ENCODE measurements at regions of chr3 and their contacts with region 1.

Region 1: DNA sequence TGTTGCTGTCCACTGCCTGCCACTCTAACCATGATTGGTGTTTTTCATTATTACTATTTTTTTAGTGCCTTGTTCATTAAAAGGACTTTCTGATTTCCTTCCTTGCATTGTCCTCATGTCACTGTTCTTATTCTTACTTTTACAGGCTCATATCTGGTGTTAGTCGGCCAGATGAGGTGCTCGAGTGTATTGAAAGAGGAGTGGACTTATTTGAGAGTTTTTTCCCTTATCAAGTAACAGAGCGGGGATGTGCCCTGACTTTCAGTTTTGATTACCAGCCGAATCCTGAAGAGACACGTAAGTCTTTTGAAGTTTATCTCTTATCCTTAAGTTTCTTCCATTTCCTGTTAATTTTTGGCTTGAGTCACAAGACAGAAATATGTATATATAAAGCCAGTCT is 23.2 kb downstream of the QTRT2 start:
- DNase-seq: no peak
- ATAC-seq: no peak
- H3K4me3 ChIP-seq: no peak overlapping the region
- H3K4me3 Mint-ChIP-seq: no peak overlapping the region
- H3K27ac ChIP-seq: no peak overlapping the region
- H3K27ac Mint-ChIP-seq: no peak overlapping the region
- H3K4me1 ChIP-seq: no peaks in the 10 kb centered on the region
- H3K4me1 Mint-ChIP-seq: no peaks in the 10 kb centered on the region
- H3K27me3 ChIP-seq: no peaks in the 10 kb centered on the region
- H3K27me3 Mint-ChIP-seq: no peaks in the 10 kb centered on the region
- CTCF ChIP-seq: no peak

Region 2: GRCh38 chr3:113953677-113954076 is 126.1 kb before region 1 on chr3:
- CTCF ChIA-PET with region 1: no interaction called
- POLR2A ChIA-PET with region 1: no interaction called
- intact Hi-C with region 1: no loop called
- DNase-seq: no peak
- ATAC-seq: no peak
- H3K4me3 ChIP-seq: no peak overlapping the region
- H3K4me3 Mint-ChIP-seq: no peak overlapping the region
- H3K27ac ChIP-seq: no peak overlapping the region
- H3K27ac Mint-ChIP-seq: no peak overlapping the region
- H3K4me1 ChIP-seq: peaks cover 13% of the 10 kb centered on the region
- H3K4me1 Mint-ChIP-seq: peaks cover 10% of the 10 kb centered on the region
- H3K27me3 ChIP-seq: no peaks in the 10 kb centered on the region
- H3K27me3 Mint-ChIP-seq: no peaks in the 10 kb centered on the region
- CTCF ChIP-seq: no peak

Region 3: DNA sequence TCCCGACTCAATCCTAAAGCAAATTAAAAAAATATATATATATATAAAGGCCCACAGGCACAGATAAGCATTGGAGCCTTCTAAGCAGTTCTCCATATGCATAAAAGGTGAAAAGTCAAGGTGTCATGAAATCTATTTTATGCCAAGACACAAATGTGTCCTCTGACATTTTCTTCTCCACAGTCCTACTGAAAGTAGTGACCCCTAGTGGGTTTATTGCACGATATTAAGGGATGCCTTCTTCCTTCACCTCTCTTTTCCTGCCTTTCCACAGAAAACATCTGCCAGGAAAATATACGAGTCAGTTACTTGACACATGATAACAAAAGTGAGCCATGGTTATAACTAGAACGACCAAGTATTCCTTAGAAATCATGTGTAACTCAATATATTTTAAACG is 517.3 kb after region 1 on chr3:
- CTCF ChIA-PET with region 1: no interaction called
- POLR2A ChIA-PET with region 1: no interaction called
- intact Hi-C with region 1: loop called in 1 of 2 experiments (anchors 10 kb)
- DNase-seq: no peak
- ATAC-seq: no peak
- H3K4me3 ChIP-seq: no peak overlapping the region
- H3K4me3 Mint-ChIP-seq: no peak overlapping the region
- H3K27ac ChIP-seq: no peak overlapping the region
- H3K27ac Mint-ChIP-seq: no peak overlapping the region
- H3K4me1 ChIP-seq: no peaks in the 10 kb centered on the region
- H3K4me1 Mint-ChIP-seq: no peaks in the 10 kb centered on the region
- H3K27me3 ChIP-seq: no peaks in the 10 kb centered on the region
- H3K27me3 Mint-ChIP-seq: no peaks in the 10 kb centered on the region
- CTCF ChIP-seq: no peak